Activated CD4-positive, alpha-beta T cell treated with anti-CD3 and anti-CD28 coated beads for 36 hours (primary cell): ENCODE measurements at regions of chr1 and their contacts with region 1.

Region 1: DNA sequence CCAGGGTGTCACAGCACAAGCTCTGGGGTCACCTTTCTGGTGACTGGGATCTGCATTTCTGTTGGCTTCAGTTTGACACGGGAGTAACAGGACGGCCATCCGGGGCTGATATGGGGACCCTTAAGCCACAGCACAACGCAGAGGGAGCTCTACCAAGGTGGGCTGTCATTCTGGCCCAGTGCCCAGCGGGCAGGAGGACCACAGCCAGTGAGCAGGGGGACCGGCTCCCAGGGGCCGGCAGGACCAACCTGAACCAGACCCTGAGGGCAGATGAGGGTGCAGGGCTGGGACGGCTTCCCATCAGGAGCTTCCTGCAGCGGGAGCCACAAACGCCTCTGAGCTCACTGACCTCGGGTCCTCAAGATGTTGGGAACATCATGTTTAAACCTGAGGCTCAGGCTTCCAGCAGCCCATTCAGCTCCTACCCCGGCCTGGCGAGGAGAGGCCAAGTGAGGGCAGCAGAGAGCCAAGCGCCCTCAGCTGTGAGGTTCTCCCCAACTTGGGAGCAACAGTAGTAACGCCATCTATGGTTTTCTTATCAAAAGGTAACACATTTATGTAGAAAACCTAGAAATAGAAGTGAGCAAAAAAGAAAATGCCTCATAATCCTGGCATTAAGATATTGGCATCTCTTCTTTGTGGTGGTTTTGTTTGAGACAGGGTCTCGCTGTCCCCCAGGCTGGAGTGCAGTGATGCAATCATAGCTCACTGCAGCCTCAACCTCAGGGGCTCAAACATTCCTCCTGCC is 26.8 kb downstream of the TMEM201 start:
- DNase-seq: peak; percentile 79
- ATAC-seq: peak; percentile 93
- H3K4me3 Mint-ChIP-seq: no peak overlapping the region
- H3K27ac Mint-ChIP-seq: no peak overlapping the region
- H3K4me1 Mint-ChIP-seq: no peaks in the 10 kb centered on the region
- H3K27me3 Mint-ChIP-seq: peaks cover 3% of the 10 kb centered on the region

Region 2: DNA sequence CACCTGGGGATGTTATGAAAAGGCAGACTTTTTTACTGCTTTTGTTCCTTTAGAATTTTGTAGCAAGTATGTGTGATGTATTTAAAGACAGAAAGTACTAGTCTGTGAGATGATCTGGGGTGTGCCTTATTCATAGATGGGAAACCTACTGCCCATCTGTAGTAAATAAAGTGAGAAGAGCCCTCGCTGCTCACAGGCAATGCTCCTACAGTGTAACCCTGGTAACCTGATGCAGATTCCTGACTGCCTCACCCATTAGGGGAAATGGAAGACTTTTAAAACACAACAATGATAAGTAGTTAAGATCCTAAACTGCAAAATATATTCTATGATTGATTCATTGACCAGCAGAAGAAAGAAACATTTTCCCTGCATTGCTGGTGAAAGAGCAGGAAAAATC is 46.2 kb before region 1 on chr1:
- CTCF ChIA-PET with region 1: no interaction called
- POLR2A ChIA-PET with region 1: no interaction called
- intact Hi-C with region 1: no loop called
- DNase-seq: no peak
- ATAC-seq: no peak
- H3K4me3 Mint-ChIP-seq: no peak overlapping the region
- H3K27ac Mint-ChIP-seq: no peak overlapping the region
- H3K4me1 Mint-ChIP-seq: no peaks in the 10 kb centered on the region
- H3K27me3 Mint-ChIP-seq: no peaks in the 10 kb centered on the region

Region 3: GRCh38 chr1:9867408-9868243 is 252.1 kb after region 1 on chr1:
- CTCF ChIA-PET with region 1: interaction called, 5 read pairs
- POLR2A ChIA-PET with region 1: no interaction called
- intact Hi-C with region 1: loop called in 1 of 2 experiments (anchors 1 kb)
- DNase-seq: peak; percentile 93
- ATAC-seq: peak; percentile 99
- H3K4me3 Mint-ChIP-seq: no peak overlapping the region
- H3K27ac Mint-ChIP-seq: no peak overlapping the region
- H3K4me1 Mint-ChIP-seq: no peaks in the 10 kb centered on the region
- H3K27me3 Mint-ChIP-seq: no peaks in the 10 kb centered on the region